ENCODE measurements at regions of chr2 and their contacts with region 1.

Region 1: DNA sequence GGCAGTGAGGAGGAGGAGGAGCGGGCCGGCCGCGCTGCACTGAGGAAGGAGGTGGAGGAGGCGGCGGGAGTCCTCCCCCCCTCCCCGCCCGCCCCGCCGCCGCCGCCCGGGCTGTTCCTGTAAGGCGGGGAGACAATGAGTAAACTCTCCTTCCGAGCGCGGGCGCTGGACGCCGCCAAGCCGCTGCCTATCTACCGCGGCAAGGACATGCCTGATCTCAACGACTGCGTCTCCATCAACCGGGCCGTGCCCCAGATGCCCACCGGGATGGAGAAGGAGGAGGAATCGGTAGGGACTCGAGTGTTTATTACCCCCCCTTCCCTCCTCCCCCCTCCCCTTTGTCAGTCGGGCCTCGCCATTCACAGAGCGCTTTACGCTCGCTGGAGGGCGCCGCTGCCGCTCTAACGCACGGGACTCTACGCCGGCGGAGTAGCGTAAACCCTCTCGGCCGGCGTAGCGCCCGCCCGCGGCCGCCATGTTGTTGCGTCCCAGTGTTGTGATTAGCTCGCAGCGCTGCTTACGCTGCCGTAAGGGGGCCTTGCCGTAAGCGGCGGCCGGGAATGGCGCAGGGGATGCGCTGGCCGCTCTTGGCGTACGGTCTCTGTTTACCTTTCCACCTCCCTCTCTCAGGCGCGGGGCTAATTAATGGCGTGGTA is 460 bp downstream of the EPC2 start:
- DNase-seq: peak; percentile 75 to 97
- H3K4me3 ChIP-seq: peak overlapping the region; percentile 89 to 98
- H3K27ac ChIP-seq: peak overlapping the region; percentile 99 to 100
- H3K4me1 ChIP-seq: peaks cover 0 to 14% of the 10 kb centered on the region in 2 donors
- H3K27me3 ChIP-seq: no peaks in the 10 kb centered on the region
- CTCF ChIP-seq: peak in 2 of 3 experiments; percentile 23 to 40

Region 2: GRCh38 chr2:147843864-147844696 is 800.9 kb before region 1 on chr2:
- intact Hi-C with region 1: loop called (anchors 5 kb)
- DNase-seq: peak; percentile 47 to 95
- H3K4me3 ChIP-seq: peak overlapping the region; percentile 83 to 91
- H3K27ac ChIP-seq: peak overlapping the region; percentile 97 to 98
- H3K4me1 ChIP-seq: peaks cover 0 to 16% of the 10 kb centered on the region in 2 donors
- H3K27me3 ChIP-seq: no peaks in the 10 kb centered on the region
- CTCF ChIP-seq: peak in 2 of 3 experiments; percentile 27 to 31

Region 3: DNA sequence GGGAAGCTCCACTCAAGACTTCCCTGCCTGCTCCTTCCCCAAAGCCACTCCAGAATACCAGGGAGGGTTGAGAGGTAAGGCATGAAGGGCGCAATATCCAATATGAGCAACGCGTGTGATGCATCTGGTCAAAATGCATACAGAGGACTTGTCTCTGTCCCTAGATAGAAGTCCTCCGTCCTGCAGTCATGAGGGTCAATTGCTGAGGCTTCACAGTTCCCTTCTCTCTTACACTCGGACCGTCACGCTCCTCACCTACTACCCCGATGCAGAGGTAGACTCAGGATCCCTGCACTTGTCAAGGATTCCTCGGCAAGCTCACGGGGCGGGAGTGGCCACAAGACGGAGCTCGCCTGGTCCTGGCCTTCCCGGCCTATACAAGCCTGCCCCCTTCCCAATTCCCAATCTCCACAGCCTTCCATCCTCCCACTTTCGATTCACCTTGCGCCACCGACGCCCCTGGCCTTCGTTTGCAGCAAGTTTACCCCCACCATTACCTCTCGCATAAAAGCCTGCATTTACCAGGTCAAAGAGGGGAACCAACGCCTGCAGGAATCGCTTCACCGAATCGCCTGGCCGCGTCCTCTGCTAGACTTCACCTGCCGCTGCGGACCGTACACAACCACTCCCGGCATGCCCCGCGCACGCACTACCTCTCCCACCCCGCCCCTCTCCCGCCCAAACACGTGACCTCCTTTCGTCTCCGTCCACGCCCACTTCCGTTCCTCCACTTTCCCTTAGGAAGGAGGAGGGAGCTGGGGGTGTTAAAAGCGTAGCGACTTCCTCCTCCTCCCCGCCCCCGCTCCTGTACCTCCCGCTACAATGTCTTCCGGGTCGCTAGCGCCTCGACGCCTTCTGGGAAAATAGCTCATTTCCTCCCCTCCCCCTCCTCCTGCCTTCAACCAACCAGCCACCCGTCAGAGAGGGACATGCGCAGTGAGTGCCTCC is 624.6 kb before region 1 on chr2 and contains the start of gene ORC4:
- intact Hi-C with region 1: loop called (anchors 1 kb)
- DNase-seq: peak; percentile 91 to 99
- H3K4me3 ChIP-seq: peak within 1 kb of the TSS; percentile 81 to 86
- H3K27ac ChIP-seq: peak within 1 kb of the TSS; percentile 89 to 91
- H3K4me1 ChIP-seq: peaks cover 3 to 15% of the 10 kb centered on the region in 2 donors
- H3K27me3 ChIP-seq: no peaks in the 10 kb centered on the region
- CTCF ChIP-seq: peak in 2 of 3 experiments; percentile 17 to 43
- total RNA-seq, gene ORC4: 79.6 TPM

Region 4: GRCh38 chr2:148627224-148627623 is 17.8 kb before region 1 on chr2:
- intact Hi-C with region 1: no loop called
- DNase-seq: no peak
- H3K4me3 ChIP-seq: no peak overlapping the region
- H3K27ac ChIP-seq: no peak overlapping the region
- H3K4me1 ChIP-seq: no peaks in the 10 kb centered on the region
- H3K27me3 ChIP-seq: no peaks in the 10 kb centered on the region
- CTCF ChIP-seq: no peak

Region 5: GRCh38 chr2:148832637-148833036 is 187.6 kb after region 1 on chr2:
- intact Hi-C with region 1: no loop called
- DNase-seq: no peak
- H3K4me3 ChIP-seq: no peak overlapping the region
- H3K27ac ChIP-seq: no peak overlapping the region
- H3K4me1 ChIP-seq: no peaks in the 10 kb centered on the region
- H3K27me3 ChIP-seq: no peaks in the 10 kb centered on the region
- CTCF ChIP-seq: no peak

Region 6: DNA sequence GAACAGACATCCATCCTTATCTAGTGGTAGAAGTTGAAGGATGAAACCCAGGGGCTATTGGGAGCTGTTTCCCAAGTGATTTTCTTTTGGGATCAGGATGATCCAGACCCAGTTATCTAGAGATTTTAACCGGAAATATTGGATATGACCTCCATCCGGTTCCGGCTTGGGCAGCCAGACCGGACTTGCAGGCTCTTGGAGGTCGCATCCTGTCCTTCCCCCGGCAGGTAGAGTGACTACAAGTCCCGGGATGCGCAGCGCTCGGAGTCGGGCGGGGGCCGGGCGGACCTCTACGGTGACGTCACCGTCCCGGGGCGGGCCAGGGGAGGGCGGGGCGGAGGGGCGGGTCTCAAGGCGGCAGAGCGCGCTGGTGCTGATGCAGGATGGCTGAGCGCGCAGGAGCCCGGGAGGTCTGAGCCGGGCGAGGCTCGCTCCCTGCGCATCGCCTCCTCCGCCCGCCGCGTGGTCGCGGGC is 229.9 kb after region 1 on chr2 and contains the start of gene KIF5C:
- intact Hi-C with region 1: loop called (anchors 2 kb)
- DNase-seq: peak in 1 of 2 donors; percentile 87
- H3K4me3 ChIP-seq: peak within 1 kb of the TSS; percentile 73 to 86
- H3K27ac ChIP-seq: no peak within 1 kb of the TSS
- H3K4me1 ChIP-seq: peaks cover 2 to 14% of the 10 kb centered on the region in 2 donors
- H3K27me3 ChIP-seq: peaks cover 3% of the 10 kb centered on the region
- CTCF ChIP-seq: no peak
- total RNA-seq, gene KIF5C: 6.2 TPM